Posterior vena cava (tissue), 2 donors: ENCODE measurements at regions of chrX and their contacts with region 1.

Region 1: DNA sequence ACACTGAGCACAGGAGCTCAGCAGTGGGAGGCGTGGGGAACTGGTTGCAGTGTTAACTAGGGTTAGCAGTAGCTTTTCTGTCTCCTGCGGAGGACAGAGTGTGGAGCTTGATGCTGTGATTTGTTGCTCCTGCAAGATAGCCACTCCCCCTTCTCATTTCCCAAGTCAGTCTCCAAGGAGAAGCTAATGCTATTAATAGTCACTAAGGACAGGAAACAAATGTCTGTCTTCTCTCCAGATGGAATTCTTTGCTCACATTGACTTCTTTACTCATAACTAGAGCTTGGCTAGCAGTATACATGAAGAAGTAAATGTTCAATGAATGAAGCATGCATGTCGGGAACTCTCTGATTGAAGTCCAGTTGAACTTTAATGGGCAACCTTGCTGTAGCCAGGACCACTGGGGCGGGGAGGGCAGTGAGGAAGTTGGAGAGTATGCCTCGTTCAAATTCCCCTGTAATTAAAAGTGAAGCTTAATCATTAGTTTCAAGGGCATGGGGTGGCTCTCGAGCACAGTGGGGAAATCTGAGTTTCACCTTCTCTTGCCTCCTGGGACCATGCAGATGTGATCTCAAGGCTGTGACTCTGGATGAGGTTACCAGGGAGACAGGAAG is 156.6 kb upstream of the SCML1 start:
- DNase-seq: no peak

Region 2: GRCh38 chrX:19272452-19272851 is 1691.8 kb after region 1 on chrX:
- intact Hi-C with region 1: loop called in 1 of 2 experiments (anchors 10 kb)
- DNase-seq: no peak